Dorsolateral prefrontal cortex (tissue), 120 donors: ENCODE measurements at regions of chr9 and their contacts with region 1.

Region 1: GRCh38 chr9:131334629-131335367 is 45.3 kb downstream of the PLPP7 start:
- DNase-seq: peak in 1 of 10 donors; percentile 38
- H3K4me3 ChIP-seq: no peak overlapping the region
- H3K27ac ChIP-seq: no peak overlapping the region
- H3K27me3 ChIP-seq: no peaks in the 10 kb centered on the region
- CTCF ChIP-seq: no peak

Region 2: GRCh38 chr9:131178382-131178781 is 156.4 kb before region 1 on chr9:
- intact Hi-C with region 1: loop called (anchors 1 kb)
- DNase-seq: peak; percentile 47 to 78 (median 68)
- H3K4me3 ChIP-seq: no peak overlapping the region
- H3K27ac ChIP-seq: no peak overlapping the region
- H3K27me3 ChIP-seq: no peaks in the 10 kb centered on the region
- CTCF ChIP-seq: peak; percentile 67 to 99 (median 94)

Region 3: GRCh38 chr9:131262327-131263032 is 72.3 kb before region 1 on chr9:
- intact Hi-C with region 1: no loop called
- DNase-seq: no peak
- H3K4me3 ChIP-seq: no peak overlapping the region
- H3K27ac ChIP-seq: peak overlapping the region in 2 of 59 donors; percentile 11 to 18
- H3K27me3 ChIP-seq: no peaks in the 10 kb centered on the region
- CTCF ChIP-seq: no peak

Region 4: DNA sequence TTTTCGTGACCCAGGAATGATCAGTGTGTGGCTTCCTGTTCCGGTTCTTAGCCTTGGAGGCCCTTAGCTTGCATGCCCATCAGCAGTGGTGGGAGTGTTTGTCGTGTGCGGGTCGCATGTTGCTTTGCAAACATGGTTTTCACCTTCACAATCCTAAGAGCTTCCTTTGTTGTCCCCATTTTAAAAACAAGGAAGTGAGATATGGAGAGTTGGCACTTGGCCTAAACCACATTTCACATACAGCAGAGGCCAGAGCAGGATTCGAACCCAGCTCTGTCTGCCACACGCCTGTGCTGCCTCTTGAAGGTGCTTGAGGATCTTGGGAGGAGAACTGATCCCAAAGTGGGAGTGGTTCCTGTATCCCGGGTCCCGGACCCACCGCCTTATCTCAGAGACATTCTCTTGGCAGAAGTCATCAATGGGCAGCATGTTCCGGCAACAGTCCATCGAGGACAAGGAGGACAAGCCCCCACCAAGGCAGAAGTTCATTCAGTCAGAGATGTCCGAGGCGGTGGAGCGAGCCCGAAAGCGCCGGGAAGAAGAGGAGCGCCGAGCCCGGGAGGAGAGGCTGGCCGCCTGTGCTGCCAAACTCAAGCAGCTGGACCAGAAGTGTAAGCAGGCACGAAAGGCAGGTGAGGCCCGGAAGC is 129.7 kb after region 1 on chr9:
- intact Hi-C with region 1: no loop called
- DNase-seq: no peak
- H3K4me3 ChIP-seq: no peak overlapping the region
- H3K27ac ChIP-seq: no peak overlapping the region
- H3K27me3 ChIP-seq: no peaks in the 10 kb centered on the region
- CTCF ChIP-seq: no peak